ENCODE measurements at regions of chr12 and their contacts with region 1.

Region 1: GRCh38 chr12:5846950-5847349 is 98.1 kb downstream of the ANO2 start:
- DNase-seq: no peak
- H3K4me3 ChIP-seq: no peak overlapping the region
- CTCF ChIP-seq: no peak

Region 2: DNA sequence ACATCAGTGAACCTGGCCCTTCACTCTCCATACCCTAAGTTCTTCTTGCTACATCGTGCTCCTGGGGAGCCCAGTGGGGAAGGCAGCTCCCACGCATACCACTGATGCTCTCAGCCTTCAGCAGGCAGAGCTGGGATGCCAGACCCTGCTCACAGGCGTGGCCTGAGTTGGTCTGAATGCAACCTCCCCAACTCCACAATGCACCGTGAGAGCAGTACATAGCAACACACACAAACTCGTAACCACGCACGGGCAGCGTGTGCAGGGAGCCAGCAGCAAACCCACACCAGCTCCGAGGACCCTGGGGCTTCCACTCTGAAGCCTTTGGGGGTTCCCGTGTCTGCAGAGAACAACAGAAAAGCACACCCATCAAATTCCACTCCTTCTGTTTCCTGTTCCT is 60.9 kb after region 1 on chr12:
- in situ Hi-C with region 1: loop called (anchors 5 kb)
- DNase-seq: no peak
- H3K4me3 ChIP-seq: no peak overlapping the region
- CTCF ChIP-seq: no peak

Region 3: GRCh38 chr12:5923751-5924150 is 76.8 kb after region 1 on chr12:
- in situ Hi-C with region 1: no loop called
- DNase-seq: no peak
- H3K4me3 ChIP-seq: no peak overlapping the region
- CTCF ChIP-seq: no peak

Region 4: DNA sequence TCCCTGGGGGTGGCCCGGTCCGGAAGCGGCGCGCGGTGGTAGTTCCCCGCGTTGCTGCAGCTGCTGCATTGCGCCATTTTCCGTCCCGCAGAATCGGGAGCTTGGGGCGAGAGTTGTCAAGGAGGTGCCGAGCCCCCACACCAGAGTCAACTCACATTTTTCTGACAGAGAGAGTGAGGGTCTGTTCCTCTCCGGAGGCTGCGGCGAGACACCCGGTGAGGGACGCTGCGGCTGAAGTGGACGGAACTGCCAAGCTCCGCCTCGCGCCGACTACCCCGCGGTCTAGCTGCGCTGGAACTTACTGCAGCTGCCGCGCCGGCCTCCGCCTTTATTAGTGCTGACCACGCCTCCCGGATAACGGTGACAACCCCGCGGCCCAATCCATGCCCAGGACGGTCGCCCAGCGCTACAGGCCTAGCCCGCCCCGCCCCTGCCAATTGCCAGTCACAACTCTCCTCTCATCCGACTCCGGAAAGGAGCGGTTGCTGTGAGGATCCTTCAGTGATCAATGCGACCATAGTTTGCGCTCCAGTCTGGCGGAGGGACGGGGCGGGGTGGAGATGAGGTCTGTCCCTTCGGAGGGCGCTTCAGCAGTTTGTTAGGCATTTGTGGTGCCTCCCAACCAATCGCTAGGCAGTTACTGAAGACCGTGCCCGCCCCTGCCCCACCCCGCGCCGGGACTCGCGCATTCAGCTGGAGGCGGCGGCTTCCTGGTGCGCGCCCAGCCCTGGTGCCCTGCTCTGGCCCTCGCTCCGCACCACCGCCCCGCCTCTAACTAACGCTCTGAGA is 623.6 kb after region 1 on chr12 and contains the start of gene VAMP1:
- in situ Hi-C with region 1: no loop called
- DNase-seq: peak; percentile 86
- H3K4me3 ChIP-seq: peak within 1 kb of the TSS; percentile 79
- CTCF ChIP-seq: no peak

Measured in astrocyte of the cerebellum (primary cell).